HCT116 (cell line): ENCODE measurements at regions of chr1 and their contacts with region 1.

Region 1: DNA sequence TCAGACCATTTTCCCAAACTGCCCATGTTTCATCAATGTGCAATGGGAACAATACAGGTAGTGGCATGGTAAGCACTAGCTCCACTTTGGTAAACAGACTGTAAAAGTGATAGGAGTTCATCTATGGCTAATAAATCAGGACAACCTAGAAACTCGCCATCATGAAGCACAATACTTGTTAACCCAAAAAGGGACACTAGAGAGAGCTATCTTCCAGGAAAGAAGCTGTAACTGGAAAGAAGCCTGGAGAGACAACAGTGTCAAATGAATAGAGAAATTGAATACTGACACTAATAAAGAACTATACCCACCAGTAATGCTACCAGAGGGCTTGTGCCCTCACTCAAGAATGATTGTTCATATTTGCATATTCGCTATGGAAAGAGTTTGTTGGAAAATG is 164.7 kb upstream of the RGS18 start:
- DNase-seq: peak; percentile 12
- ATAC-seq: peak; percentile 63; the same call in 1 of the 2 replicates
- H3K4me3 ChIP-seq: no peak overlapping the region
- H3K27ac ChIP-seq: no peak overlapping the region
- H3K4me1 ChIP-seq: no peaks in the 10 kb centered on the region
- H3K27me3 ChIP-seq: no peaks in the 10 kb centered on the region
- CTCF ChIP-seq: peak in 2 of 3 experiments; percentile 21 to 42; a peak in 3 of 6 replicates
- POLR2A ChIP-seq: no peak
- RAD21 ChIP-seq: peak; percentile 63

Region 2: DNA sequence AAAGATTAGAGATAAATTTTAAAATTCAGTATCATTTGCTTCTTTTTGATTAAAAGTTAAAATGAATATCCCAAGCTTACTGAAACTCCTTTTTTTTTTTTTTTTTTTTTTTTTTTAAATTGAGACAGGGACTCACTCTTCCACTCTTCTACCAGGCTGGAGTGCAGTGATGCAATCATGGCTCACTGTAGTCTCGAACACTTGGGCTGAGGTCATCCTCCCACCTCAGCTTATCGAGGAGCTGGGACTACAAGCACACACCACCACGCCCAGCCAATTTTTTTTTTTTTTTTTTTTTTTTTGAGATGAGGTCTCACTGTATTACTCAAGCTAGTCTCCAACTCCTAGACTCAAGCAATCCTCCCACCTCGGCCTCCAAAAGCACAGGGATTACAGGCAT is 72.7 kb after region 1 on chr1:
- CTCF ChIA-PET with region 1: no interaction called
- POLR2A ChIA-PET with region 1: no interaction called
- RAD21 ChIA-PET with region 1: no interaction called
- intact Hi-C with region 1: no loop called
- DNase-seq: peak; percentile 0
- ATAC-seq: no peak
- H3K4me3 ChIP-seq: no peak overlapping the region
- H3K27ac ChIP-seq: no peak overlapping the region
- H3K4me1 ChIP-seq: no peaks in the 10 kb centered on the region
- H3K27me3 ChIP-seq: no peaks in the 10 kb centered on the region
- CTCF ChIP-seq: no peak
- POLR2A ChIP-seq: no peak
- RAD21 ChIP-seq: no peak

Region 3: GRCh38 chr1:192311281-192311680 is 317.7 kb after region 1 on chr1:
- CTCF ChIA-PET with region 1: interaction called, 3 read pairs
- POLR2A ChIA-PET with region 1: no interaction called
- RAD21 ChIA-PET with region 1: interaction called in 1 of 2 experiments, 3 read pairs
- intact Hi-C with region 1: loop called (anchors 10 kb)
- DNase-seq: peak; percentile 31
- ATAC-seq: peak; percentile 36; the same call in 1 of the 2 replicates
- H3K4me3 ChIP-seq: no peak overlapping the region
- H3K27ac ChIP-seq: no peak overlapping the region
- H3K4me1 ChIP-seq: no peaks in the 10 kb centered on the region
- H3K27me3 ChIP-seq: no peaks in the 10 kb centered on the region
- CTCF ChIP-seq: peak; percentile 26 to 63 (median 37); a peak in 4 of 6 replicates
- POLR2A ChIP-seq: no peak
- RAD21 ChIP-seq: peak; percentile 74

Region 4: DNA sequence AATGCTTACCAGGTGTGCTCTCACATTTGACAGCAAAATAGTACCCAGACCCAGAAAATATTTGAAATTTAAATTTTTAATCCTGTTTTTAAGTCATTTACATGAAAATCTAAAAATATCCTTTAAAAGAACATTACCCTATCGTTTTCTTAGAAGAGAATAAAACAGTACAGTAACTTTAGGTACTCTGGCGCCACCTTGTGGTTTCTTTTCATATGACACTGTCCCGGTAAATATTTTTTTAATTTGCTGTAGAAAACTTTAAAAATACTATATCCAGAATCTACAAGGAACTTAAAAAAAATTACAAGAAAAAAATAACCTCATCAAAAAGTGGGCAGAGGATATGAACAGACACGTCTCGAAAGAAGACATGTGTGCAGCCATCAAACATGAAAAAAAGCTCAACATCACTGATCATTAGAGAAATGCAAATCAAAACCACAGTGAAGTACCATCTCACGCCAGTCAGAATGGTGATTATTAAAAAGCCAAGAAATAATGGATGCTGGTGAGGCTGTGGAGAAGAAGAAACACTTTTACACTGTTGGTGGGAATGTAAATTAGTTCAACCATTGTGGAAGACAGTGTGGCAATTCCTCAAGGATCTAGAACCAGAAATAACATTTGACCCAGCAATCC is 452.4 kb after region 1 on chr1:
- CTCF ChIA-PET with region 1: interaction called, 5 read pairs
- POLR2A ChIA-PET with region 1: no interaction called
- RAD21 ChIA-PET with region 1: no interaction called
- intact Hi-C with region 1: loop called (anchors 5 kb)
- DNase-seq: peak; percentile 15
- ATAC-seq: no peak
- H3K4me3 ChIP-seq: no peak overlapping the region
- H3K27ac ChIP-seq: no peak overlapping the region
- H3K4me1 ChIP-seq: peaks cover 2 to 9% of the 10 kb centered on the region in 2 experiments; a peak in 2 of 4 replicates
- H3K27me3 ChIP-seq: no peaks in the 10 kb centered on the region
- CTCF ChIP-seq: peak; percentile 51 to 79 (median 55); a peak in 5 of 6 replicates
- POLR2A ChIP-seq: no peak
- RAD21 ChIP-seq: peak; percentile 83